Gastrocnemius medialis (tissue), 4 donors: ENCODE measurements at regions of chr1 and their contacts with region 1.

Region 1: GRCh38 chr1:153617675-153618074 is 1.6 kb upstream of the S100A14 start:
- DNase-seq: peak in 1 of 2 donors; percentile 75
- ATAC-seq: peak in 1 of 2 donors; percentile 64
- H3K4me3 ChIP-seq: no peak overlapping the region
- H3K27ac ChIP-seq: peak overlapping the region in 3 of 4 donors; percentile 16 to 66 (median 57)
- H3K4me1 ChIP-seq: peaks cover 3 to 7% of the 10 kb centered on the region in 2 donors
- H3K27me3 ChIP-seq: no peaks in the 10 kb centered on the region
- CTCF ChIP-seq: peak in 4 of 5 experiments; percentile 51 to 86 (median 60)
- POLR2A ChIP-seq: no peak

Region 2: DNA sequence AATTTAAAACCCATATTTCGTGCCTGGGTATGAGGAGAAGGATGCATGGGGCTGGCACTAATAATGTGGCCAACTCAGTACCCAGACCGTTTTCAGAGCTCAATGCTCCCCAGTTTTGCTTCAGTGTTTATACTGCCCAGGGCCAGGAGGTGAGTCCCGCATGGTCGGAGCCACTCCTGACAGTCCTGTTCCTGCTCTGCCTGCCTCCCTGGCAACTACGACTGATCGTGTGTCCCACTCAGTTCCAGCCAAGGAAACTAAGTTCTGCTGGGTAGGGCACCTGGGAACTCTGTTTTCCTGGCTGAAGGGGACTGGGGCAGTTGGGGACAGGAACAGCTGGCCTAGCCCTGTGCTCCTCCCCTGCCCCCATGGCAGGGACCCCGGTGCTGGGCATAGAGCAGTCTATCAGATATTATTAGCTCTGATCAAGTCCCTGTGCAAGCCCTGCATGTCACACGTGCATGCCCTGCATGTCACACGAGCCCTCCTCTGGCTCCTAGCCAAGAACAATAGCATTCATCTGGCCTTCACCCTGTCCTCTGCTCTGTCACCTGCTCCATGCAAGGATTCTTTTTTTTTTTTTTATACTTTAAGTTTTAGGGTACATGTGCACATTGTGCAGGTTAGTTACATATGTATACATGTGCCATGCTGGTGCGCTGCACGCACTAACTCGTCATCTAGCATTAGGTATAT is 176.3 kb before region 1 on chr1:
- in situ Hi-C with region 1: no loop called
- intact Hi-C with region 1: no loop called
- DNase-seq: no peak
- ATAC-seq: no peak
- H3K4me3 ChIP-seq: no peak overlapping the region
- H3K27ac ChIP-seq: no peak overlapping the region
- H3K4me1 ChIP-seq: no peaks in the 10 kb centered on the region
- H3K27me3 ChIP-seq: peaks cover 0 to 6% (median 0%) of the 10 kb centered on the region in 3 donors
- CTCF ChIP-seq: no peak
- POLR2A ChIP-seq: no peak

Region 3: GRCh38 chr1:153532769-153533599 is 84.7 kb before region 1 on chr1:
- in situ Hi-C with region 1: no loop called
- intact Hi-C with region 1: loop called (anchors 5 kb)
- DNase-seq: peak; percentile 71 to 84
- ATAC-seq: peak; percentile 54 to 59
- H3K4me3 ChIP-seq: peak overlapping the region; percentile 54 to 70 (median 65)
- H3K27ac ChIP-seq: peak overlapping the region; percentile 82 to 92 (median 86)
- H3K4me1 ChIP-seq: peaks cover 10 to 28% of the 10 kb centered on the region in 2 donors
- H3K27me3 ChIP-seq: no peaks in the 10 kb centered on the region
- CTCF ChIP-seq: peak; percentile 90 to 93 (median 91)
- POLR2A ChIP-seq: no peak

Region 4: DNA sequence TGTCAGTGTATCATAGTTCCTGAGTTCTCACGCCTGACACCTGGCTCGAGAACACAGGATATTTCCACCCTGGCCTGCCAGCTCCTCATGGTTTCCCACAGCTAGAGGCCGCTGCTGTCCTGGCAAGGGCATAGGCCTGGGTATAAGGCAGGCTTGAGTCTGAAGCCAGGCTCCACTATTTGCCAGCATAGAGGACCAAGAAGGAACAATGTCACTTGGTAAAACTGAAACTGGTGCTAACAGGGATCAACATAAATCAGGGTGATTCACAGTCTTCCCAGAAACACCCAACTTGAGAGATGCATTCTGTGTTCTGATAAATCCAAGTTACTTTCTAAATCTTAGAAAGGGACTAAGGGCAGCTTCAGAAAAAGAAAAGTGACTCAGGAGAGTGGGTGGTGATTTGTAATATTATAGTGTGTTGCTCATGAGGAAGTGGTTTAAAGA is 45.1 kb before region 1 on chr1:
- in situ Hi-C with region 1: no loop called
- intact Hi-C with region 1: loop called (anchors 1 kb)
- DNase-seq: peak; percentile 80 to 88
- ATAC-seq: peak; percentile 83 to 86
- H3K4me3 ChIP-seq: no peak overlapping the region
- H3K27ac ChIP-seq: peak overlapping the region; percentile 59 to 77 (median 67)
- H3K4me1 ChIP-seq: peaks cover 14 to 27% of the 10 kb centered on the region in 2 donors
- H3K27me3 ChIP-seq: no peaks in the 10 kb centered on the region
- CTCF ChIP-seq: peak; percentile 78 to 90 (median 84)
- POLR2A ChIP-seq: no peak

Region 5: DNA sequence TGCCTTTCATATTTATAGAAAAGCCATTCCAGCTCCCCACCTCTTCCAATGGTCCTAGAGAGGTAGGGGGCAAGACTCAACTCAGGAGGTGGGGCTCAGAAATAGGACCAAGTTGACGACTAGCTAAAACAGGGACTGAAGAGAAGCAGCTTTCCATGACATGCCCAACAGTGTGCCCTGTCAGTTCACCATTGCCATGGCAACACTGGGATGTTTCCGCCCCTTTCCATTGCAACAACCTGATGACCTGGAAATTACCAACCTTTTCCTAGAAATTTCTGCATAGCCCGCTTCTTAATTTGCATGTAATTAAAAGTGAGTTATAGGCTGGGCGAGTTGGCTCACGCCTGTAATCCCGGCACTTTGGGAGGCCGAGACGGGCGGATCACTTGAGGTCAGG is 87.8 kb after region 1 on chr1:
- in situ Hi-C with region 1: no loop called
- intact Hi-C with region 1: no loop called
- DNase-seq: no peak
- ATAC-seq: no peak
- H3K4me3 ChIP-seq: no peak overlapping the region
- H3K27ac ChIP-seq: no peak overlapping the region
- H3K4me1 ChIP-seq: no peaks in the 10 kb centered on the region
- H3K27me3 ChIP-seq: no peaks in the 10 kb centered on the region
- CTCF ChIP-seq: no peak
- POLR2A ChIP-seq: no peak

Region 6: GRCh38 chr1:154398141-154398540 is 780.5 kb after region 1 on chr1:
- in situ Hi-C with region 1: no loop called
- intact Hi-C with region 1: loop called (anchors 5 kb)
- DNase-seq: no peak
- ATAC-seq: no peak
- H3K4me3 ChIP-seq: no peak overlapping the region
- H3K27ac ChIP-seq: no peak overlapping the region
- H3K4me1 ChIP-seq: no peaks in the 10 kb centered on the region
- H3K27me3 ChIP-seq: no peaks in the 10 kb centered on the region
- CTCF ChIP-seq: no peak
- POLR2A ChIP-seq: no peak